HEK293T (cell line): ENCODE measurements at regions of chr4 and their contacts with region 1.

Region 1: DNA sequence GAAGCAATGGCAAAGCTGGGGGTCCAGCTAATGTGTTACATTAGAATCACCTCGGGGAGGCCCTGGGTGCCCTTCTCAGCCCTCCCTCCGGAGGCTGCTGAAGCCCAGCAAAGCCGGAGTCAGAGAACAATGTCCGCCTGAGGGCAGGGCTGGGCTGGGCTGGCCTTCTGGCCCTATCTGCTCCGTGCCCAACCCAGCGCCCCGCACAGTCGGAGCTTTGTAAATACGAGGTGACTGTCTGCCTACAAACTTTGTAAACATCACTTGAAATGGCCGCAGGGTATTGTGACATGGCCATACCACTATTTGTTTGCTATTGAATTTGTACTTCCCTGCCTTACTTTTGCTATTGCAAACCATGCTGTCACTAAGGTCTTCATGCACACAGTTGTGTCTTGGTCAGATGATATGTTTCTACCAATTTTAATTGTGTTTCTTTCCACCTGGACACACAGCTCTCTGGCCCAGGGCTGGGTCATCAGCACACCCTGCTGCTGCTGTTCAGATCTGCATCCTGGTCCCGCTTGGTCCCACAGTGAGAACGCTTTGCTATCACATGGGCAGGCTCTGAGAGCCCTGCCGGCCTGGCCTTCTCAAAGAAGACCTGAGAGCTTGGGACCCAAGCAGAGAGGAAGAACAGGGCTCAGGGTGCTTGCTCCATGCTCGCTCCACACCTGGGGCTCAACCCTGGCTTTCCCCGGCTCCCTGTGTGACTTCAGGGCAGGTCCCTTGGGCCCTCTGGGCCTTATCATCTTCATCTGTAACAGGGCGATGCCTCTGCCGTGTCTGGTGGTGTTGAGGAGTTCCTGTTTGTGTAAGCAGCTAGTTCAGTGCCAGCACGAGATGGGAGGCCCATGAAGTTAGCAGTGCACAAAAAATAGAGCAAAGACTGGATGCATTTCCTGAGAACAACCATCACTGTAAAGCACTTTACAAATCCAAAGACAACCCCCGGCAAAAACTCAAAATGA is 2.3 kb downstream of the S100P start:
- DNase-seq: no peak

Region 2: GRCh38 chr4:6716018-6716911 is 20.3 kb after region 1 on chr4 and contains the start of gene BLOC1S4:
- CTCF ChIA-PET with region 1: no interaction called
- POLR2A ChIA-PET with region 1: interaction called, 21 read pairs
- DNase-seq: peak; percentile 96

Region 3: DNA sequence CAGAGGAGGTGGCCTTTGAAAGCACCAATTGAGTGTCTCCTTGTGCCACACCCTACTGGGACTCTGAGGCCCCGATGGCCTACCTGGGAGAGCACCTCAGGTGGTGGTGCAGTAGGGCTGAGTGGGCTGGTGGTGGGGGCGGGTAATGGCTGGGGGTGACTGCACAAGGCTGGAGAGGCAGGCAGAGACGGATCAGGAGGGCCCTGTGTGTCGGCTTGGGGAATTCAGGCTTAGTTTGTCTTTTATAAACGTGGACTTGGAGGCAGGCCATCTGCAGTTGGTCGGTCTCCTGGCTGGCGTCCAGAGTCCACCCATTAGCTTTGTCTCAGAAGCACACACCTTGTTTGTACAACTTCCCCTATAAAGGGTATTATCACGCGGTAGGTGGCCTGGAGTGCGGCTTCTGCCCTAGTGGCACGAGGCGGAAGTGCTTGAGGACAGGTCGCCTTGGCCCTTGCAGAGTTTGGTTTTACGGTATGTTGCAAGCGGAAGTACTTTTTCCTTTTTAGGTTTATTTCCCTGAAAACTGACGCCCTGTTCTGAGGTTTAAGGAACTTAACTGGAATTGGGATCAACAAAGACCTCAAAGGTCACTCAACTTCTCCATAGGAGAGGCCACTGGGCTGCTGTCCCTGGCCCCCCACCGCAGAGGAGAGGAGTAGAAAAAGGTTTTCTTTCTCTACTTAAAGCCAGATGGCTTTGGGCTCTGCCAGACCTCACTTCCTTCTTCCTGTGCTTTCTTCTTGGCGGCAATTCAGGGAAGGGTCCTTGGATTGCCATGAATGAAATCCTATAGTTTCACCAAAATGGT is 221.7 kb after region 1 on chr4:
- CTCF ChIA-PET with region 1: no interaction called
- POLR2A ChIA-PET with region 1: no interaction called
- DNase-seq: peak; percentile 69